ENCODE measurements at regions of chr10 and their contacts with region 1.

Region 1: DNA sequence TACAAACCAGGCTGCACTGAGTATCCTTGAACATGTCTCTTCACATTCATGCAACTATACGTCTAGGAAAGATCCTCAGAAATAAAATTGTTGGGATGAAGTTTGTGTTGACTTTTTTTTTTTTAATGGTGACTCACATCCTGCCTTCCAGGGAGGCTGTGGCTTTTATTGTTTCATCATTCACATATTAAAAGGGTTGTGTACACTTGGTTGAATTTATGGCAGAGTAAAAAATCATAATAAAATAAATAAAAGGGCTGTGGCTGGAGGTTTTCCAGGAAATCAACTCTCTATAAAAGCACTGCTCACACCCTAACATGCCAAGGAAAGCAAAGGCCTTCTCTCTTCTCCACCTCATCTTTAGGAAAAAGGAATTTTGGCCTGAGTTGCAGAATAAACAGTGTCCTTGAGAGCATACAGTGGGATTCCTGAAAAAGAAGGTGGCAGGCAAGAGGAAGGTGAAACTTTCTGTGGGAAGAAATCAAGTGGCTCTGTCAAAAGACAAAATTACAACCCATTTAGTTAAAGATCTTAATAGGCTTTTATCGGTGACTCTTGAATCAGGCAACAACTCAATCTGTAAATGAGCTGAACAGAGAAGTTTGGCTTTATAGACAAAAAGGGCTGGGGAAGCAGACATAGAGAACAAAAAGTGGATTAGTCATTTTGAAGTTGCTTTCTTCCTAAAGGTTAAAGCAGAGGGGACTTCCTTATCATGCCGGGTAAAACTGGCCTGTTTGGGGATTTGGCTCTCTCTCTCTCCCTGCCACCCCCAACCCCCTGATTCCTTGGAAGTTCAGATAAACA is 41.6 kb upstream of the FHIP2A start:
- DNase-seq: no peak
- ATAC-seq: no peak
- H3K4me3 ChIP-seq: no peak overlapping the region
- H3K4me3 Mint-ChIP-seq: no peak overlapping the region
- H3K27ac ChIP-seq: no peak overlapping the region
- H3K27ac Mint-ChIP-seq: no peak overlapping the region
- H3K4me1 ChIP-seq: no peaks in the 10 kb centered on the region
- H3K4me1 Mint-ChIP-seq: no peaks in the 10 kb centered on the region
- H3K27me3 ChIP-seq: peaks cover 0 to 4% (median 0%) of the 10 kb centered on the region in 4 experiments
- H3K27me3 Mint-ChIP-seq: peaks cover 5% of the 10 kb centered on the region
- CTCF ChIP-seq: no peak

Region 2: GRCh38 chr10:114297136-114297705 is 482.8 kb before region 1 on chr10:
- CTCF ChIA-PET with region 1: interaction called, 10 read pairs
- POLR2A ChIA-PET with region 1: no interaction called
- intact Hi-C with region 1: no loop called
- DNase-seq: no peak
- ATAC-seq: no peak
- H3K4me3 ChIP-seq: no peak overlapping the region
- H3K4me3 Mint-ChIP-seq: no peak overlapping the region
- H3K27ac ChIP-seq: no peak overlapping the region
- H3K27ac Mint-ChIP-seq: no peak overlapping the region
- H3K4me1 ChIP-seq: no peaks in the 10 kb centered on the region
- H3K4me1 Mint-ChIP-seq: no peaks in the 10 kb centered on the region
- H3K27me3 ChIP-seq: no peaks in the 10 kb centered on the region
- H3K27me3 Mint-ChIP-seq: no peaks in the 10 kb centered on the region
- CTCF ChIP-seq: no peak

Region 3: DNA sequence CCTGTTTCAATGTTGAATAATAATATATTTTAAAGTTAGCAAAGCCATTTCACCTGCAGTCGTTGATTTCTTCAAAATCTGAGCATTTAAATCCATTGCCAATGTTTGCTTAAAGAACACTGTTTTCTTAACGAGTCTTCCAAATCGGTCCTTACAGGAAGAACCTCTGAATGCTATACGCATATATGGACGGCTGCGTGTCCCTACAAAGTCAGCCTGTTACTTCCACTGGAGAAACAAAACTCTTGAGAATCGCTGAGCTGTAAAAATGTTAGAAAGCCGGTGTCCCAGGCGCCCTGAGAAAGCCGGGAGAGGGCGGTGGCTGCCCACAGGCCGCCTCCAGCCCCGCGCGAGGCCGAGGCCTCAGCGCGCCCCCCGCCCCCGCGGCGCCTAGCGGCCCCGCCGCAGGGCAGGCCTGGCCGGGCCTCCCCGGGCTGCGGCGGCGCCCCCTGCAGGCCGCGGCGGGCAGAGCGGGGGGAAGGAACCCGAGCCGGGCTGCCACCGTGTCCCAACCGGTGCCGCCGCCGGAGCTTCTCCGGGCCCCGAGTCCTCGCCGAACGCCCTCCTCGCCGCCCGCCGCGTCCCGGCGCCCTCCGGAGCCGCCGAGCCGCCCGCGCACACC is 41.4 kb after region 1 on chr10 and contains the start of gene FHIP2A:
- CTCF ChIA-PET with region 1: no interaction called
- POLR2A ChIA-PET with region 1: no interaction called
- intact Hi-C with region 1: no loop called
- DNase-seq: peak; percentile 90
- ATAC-seq: peak; percentile 93
- H3K4me3 ChIP-seq: peak within 1 kb of the TSS; percentile 53 to 86 (median 78)
- H3K4me3 Mint-ChIP-seq: peak within 1 kb of the TSS; percentile 94
- H3K27ac ChIP-seq: peak within 1 kb of the TSS; percentile 57 to 83
- H3K27ac Mint-ChIP-seq: peak within 1 kb of the TSS; percentile 96
- H3K4me1 ChIP-seq: peaks cover 6 to 13% of the 10 kb centered on the region in 2 donors
- H3K4me1 Mint-ChIP-seq: peaks cover 29% of the 10 kb centered on the region
- H3K27me3 ChIP-seq: no peaks in the 10 kb centered on the region
- H3K27me3 Mint-ChIP-seq: no peaks in the 10 kb centered on the region
- CTCF ChIP-seq: peak; percentile 64
- total RNA-seq, gene FHIP2A: 18.2 and 28.6 TPM in 2 replicates

Region 4: GRCh38 chr10:115043719-115044118 is 263.7 kb after region 1 on chr10:
- CTCF ChIA-PET with region 1: no interaction called
- POLR2A ChIA-PET with region 1: no interaction called
- intact Hi-C with region 1: no loop called
- DNase-seq: no peak
- ATAC-seq: no peak
- H3K4me3 ChIP-seq: no peak overlapping the region
- H3K4me3 Mint-ChIP-seq: no peak overlapping the region
- H3K27ac ChIP-seq: no peak overlapping the region
- H3K27ac Mint-ChIP-seq: no peak overlapping the region
- H3K4me1 ChIP-seq: no peaks in the 10 kb centered on the region
- H3K4me1 Mint-ChIP-seq: no peaks in the 10 kb centered on the region
- H3K27me3 ChIP-seq: no peaks in the 10 kb centered on the region
- H3K27me3 Mint-ChIP-seq: peaks cover 8% of the 10 kb centered on the region
- CTCF ChIP-seq: no peak